H1 (cell line): ENCODE measurements at regions of chr7 and their contacts with region 1.

Region 1: DNA sequence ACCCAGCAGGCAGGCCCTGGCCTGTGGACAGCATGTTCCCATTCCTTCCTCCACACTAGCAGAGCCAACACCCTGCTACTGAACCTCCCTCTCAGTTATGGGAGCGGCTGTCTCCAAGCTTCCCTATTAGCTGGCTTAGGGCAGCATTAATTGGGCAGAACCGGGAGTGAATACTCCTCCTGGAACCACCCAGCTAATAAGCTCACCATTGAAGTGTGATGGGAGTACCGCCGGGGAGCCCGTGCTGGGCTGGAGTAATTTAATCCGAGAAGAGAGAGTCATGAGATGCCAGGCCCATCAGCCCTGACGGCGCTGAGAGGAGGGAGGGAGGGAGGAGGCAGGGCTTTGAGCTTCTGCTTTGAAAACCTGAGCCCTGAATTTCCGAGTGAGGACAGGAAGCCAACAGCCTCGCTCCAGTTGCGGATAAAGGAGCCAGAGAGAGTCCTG is 31.8 kb upstream of the ELFN1 start:
- DNase-seq: no peak
- H3K4me3 ChIP-seq: no peak overlapping the region
- H3K27ac ChIP-seq: no peak overlapping the region
- H3K4me1 ChIP-seq: no peaks in the 10 kb centered on the region; a peak in 1 of 7 replicates
- H3K27me3 ChIP-seq: no peaks in the 10 kb centered on the region
- CTCF ChIP-seq: no peak
- EP300 ChIP-seq: no peak
- POLR2A ChIP-seq: no peak
- RAD21 ChIP-seq: no peak

Region 2: DNA sequence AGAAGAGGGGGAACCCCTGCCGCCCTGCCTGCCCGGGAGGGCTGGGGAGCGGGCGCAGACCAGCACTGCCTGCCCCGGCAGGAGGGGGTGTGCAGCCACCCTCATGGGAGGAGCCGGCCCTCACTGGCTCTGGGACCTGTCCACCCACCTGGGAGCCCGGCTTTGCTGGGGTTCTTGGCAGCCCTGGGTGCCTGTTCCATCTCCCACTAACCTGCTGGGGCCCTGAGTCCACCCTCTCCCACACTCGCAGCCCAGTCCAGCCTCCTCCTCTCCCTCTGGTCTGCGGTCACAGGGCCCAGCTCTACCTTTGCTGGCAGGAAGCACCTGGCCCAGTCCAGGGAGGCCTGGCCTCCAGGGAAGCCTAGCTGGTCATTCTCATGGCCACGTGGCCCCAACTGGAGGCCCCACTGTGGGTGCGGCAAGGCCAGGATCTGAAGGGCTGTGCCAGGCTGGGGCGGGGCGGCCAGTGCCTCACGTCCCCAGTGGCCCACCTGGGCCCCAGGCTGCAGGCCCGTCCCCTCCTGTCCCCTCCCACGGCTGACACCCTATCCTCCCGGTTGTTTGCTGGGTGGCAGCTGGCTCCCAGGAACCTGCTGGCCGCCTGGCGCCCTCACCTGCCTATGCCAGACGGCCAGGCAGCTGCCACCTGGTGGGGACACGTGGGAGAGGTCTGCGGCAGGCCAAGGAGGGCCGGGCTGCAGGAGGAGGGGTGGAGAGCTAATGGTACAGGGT is 82.3 kb before region 1 on chr7 and contains the start of gene TMEM184A:
- CTCF ChIA-PET with region 1: no interaction called
- POLR2A ChIA-PET with region 1: no interaction called
- DNase-seq: peak in 1 of 2 experiments; percentile 79
- H3K4me3 ChIP-seq: no peak within 1 kb of the TSS
- H3K27ac ChIP-seq: no peak within 1 kb of the TSS
- H3K4me1 ChIP-seq: peaks cover 0 to 14% (median 10%) of the 10 kb centered on the region in 4 experiments; a peak in 6 of 7 replicates
- H3K27me3 ChIP-seq: no peaks in the 10 kb centered on the region
- CTCF ChIP-seq: peak in 2 of 3 experiments; percentile 74 to 95; a peak in 3 of 4 replicates
- EP300 ChIP-seq: no peak
- POLR2A ChIP-seq: no peak
- RAD21 ChIP-seq: peak; percentile 43 to 70
- total RNA-seq, gene TMEM184A: 1.5 and 1.8 TPM in 2 replicates

Region 3: DNA sequence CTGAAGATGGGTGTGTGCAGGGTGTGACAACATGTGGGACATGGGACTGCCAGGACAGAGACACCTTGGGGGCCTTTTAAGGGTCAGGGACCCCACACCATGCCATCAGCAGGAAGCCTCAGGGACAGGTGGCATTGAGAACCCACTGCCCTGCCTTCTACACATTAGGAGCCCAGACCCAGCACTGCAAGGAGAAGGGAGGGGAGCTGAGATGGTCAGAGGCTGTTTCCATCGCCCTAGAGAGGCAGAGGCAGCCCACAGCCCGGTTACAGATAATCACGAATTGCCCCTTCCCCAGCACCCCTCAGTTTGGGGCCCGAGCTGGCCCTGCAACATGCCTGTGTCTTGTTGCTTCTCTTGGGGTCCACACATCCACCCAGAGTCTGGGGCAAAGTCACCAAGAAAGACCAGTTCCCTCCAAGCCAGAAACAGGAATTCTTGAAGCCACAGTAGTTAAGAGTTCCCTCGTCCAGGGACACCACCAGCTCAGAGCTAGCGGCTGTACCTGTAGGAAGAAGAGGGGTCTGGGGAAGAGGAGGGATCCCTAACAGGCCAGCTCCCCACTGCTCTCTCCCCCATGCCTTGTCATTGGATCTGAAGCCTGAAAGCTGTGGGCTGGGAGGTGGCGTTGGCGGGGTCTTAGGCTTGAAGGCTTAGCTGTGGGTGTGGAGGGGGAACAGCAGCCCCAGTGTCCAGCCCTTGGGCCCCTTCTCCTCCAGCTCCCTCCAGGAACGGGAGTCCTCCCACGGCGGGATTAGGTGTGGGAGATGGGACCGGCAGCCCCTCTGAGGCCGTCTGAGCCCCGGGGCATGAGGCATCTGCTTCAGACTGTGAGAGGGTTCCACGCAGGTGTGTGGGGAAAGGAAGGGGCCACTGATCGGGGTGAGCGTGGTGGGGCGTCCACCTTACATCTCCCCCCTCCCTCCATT is 13.0 kb before region 1 on chr7:
- CTCF ChIA-PET with region 1: interaction called, 12 read pairs
- POLR2A ChIA-PET with region 1: no interaction called
- DNase-seq: no peak
- H3K4me3 ChIP-seq: no peak overlapping the region
- H3K27ac ChIP-seq: no peak overlapping the region
- H3K4me1 ChIP-seq: no peaks in the 10 kb centered on the region
- H3K27me3 ChIP-seq: no peaks in the 10 kb centered on the region
- CTCF ChIP-seq: no peak
- EP300 ChIP-seq: no peak
- POLR2A ChIP-seq: no peak
- RAD21 ChIP-seq: no peak

Region 4: GRCh38 chr7:1671594-1672451 is 33.6 kb after region 1 on chr7:
- CTCF ChIA-PET with region 1: no interaction called
- POLR2A ChIA-PET with region 1: no interaction called
- DNase-seq: peak in 1 of 2 experiments; percentile 47
- H3K4me3 ChIP-seq: no peak overlapping the region
- H3K27ac ChIP-seq: no peak overlapping the region
- H3K4me1 ChIP-seq: peaks cover 0 to 28% (median 13%) of the 10 kb centered on the region in 4 experiments; a peak in 5 of 7 replicates
- H3K27me3 ChIP-seq: peaks cover 30 to 51% (median 47%) of the 10 kb centered on the region in 4 experiments
- CTCF ChIP-seq: no peak
- EP300 ChIP-seq: no peak
- POLR2A ChIP-seq: no peak
- RAD21 ChIP-seq: no peak

Region 5: GRCh38 chr7:1758028-1758858 is 120.0 kb after region 1 on chr7:
- CTCF ChIA-PET with region 1: no interaction called
- POLR2A ChIA-PET with region 1: no interaction called
- DNase-seq: no peak
- H3K4me3 ChIP-seq: no peak overlapping the region
- H3K27ac ChIP-seq: no peak overlapping the region
- H3K4me1 ChIP-seq: peaks cover 6 to 16% (median 8%) of the 10 kb centered on the region in 4 experiments; a peak in 6 of 7 replicates
- H3K27me3 ChIP-seq: peaks cover 0 to 10% (median 4%) of the 10 kb centered on the region in 4 experiments; a peak in 4 of 7 replicates
- CTCF ChIP-seq: peak; percentile 63 to 81 (median 70)
- EP300 ChIP-seq: no peak
- POLR2A ChIP-seq: no peak
- RAD21 ChIP-seq: peak; percentile 62 to 67